Heart right ventricle (tissue), 16 donors: ENCODE measurements at regions of chr3 and their contacts with region 1.

Region 1: DNA sequence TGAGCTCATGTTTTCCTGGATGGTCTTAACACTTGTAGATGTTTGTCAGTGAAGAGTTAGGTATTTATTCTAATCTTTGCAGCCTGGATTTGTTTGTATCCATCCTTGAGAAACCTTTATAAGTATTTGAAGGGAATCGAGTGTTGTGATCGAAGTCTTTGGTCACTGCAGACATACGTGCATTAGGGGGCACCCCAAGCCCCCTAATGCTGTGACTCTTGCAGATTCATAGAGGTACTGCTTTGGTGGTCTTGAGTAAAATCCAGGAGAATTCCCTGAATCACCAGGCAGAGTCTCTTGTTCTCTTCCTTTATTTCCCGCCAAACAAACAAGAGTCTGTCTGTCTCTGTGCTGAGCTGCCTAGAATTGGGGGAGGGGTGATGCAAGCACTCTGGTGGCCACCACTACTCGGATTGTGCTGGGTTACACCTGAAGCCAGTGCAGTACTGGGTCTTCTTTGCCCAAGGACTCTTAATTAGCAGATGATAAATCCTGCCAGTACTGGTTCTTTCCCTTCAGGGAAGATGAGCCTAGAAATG is 170.5 kb upstream of the POU1F1 start:
- DNase-seq: no peak
- ATAC-seq: no peak
- H3K4me3 ChIP-seq: no peak overlapping the region
- H3K27ac ChIP-seq: no peak overlapping the region
- H3K4me1 ChIP-seq: no peaks in the 10 kb centered on the region
- H3K27me3 ChIP-seq: no peaks in the 10 kb centered on the region
- CTCF ChIP-seq: no peak

Region 2: GRCh38 chr3:87287011-87287410 is 159.9 kb before region 1 on chr3:
- intact Hi-C with region 1: no loop called
- DNase-seq: no peak
- ATAC-seq: no peak
- H3K4me3 ChIP-seq: no peak overlapping the region
- H3K27ac ChIP-seq: no peak overlapping the region
- H3K4me1 ChIP-seq: no peaks in the 10 kb centered on the region
- H3K27me3 ChIP-seq: no peaks in the 10 kb centered on the region
- CTCF ChIP-seq: no peak

Region 3: GRCh38 chr3:87600517-87600916 is 153.6 kb after region 1 on chr3:
- intact Hi-C with region 1: loop called in 1 of 10 experiments (anchors 10 kb)
- DNase-seq: no peak
- ATAC-seq: no peak
- H3K4me3 ChIP-seq: no peak overlapping the region
- H3K27ac ChIP-seq: no peak overlapping the region
- H3K4me1 ChIP-seq: no peaks in the 10 kb centered on the region
- H3K27me3 ChIP-seq: no peaks in the 10 kb centered on the region
- CTCF ChIP-seq: no peak

Region 4: DNA sequence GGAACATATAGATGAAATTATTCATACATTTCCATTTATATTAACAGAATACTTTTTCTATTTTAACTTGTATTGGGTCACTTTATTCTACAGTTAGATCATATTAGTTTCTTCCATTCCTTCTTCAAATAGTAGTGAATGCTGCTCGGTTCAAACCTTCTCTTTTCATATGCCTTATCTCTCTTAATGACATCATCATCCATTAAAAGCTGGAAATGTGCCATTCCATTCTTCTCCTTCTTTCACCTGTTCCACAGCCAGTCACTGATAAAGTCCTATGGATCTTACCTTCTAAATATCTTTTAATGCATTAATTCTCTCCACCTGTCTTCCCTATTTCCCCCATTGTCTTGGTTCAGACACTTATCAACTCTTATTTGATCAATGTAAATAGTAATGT is 187.5 kb after region 1 on chr3:
- intact Hi-C with region 1: no loop called
- DNase-seq: no peak
- ATAC-seq: no peak
- H3K4me3 ChIP-seq: no peak overlapping the region
- H3K27ac ChIP-seq: no peak overlapping the region
- H3K4me1 ChIP-seq: no peaks in the 10 kb centered on the region
- H3K27me3 ChIP-seq: no peaks in the 10 kb centered on the region
- CTCF ChIP-seq: no peak